ENCODE measurements at regions of chr5 and their contacts with region 1.

Region 1: DNA sequence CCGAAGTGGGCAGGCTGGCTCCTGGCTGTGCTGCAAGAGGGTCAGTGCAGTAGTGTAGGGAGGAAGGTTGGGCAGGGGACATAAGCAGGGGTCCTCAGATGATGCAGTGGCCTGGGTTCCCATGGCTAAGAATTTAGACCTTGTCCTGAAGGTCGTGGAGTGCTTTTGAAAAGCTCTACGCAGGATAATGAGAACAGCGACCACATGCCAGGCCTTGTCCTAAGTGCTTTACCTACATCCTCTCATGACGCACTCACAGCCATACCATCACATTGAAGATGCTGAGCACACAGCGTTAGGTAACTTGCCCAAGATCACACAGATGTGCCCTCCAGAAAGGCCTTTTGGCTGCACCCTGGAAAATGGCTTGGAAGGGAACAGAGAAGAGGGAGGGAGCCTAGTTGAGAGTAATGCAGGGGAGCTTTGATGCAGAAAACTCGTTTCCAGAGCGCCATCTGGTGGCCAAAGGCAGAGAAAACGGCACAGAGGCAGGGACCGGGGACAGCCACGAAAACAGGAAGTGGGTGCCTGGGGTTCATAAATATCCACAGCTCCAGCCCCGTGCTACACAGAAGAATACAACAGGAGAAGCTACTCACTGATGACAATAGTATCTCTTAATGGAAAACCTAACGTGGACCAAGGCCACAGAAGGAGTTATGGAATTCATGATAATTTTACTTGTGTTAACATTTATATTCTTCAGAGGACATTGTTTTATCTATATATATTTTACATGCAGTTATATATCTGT is 2.6 kb upstream of the PCDH12 start:
- H3K4me3 ChIP-seq: no peak overlapping the region
- H3K27ac ChIP-seq: no peak overlapping the region
- H3K4me1 ChIP-seq: no peaks in the 10 kb centered on the region
- CTCF ChIP-seq: peak; percentile 87

Region 2: GRCh38 chr5:141664732-141665461 is 295.7 kb before region 1 on chr5:
- CTCF ChIA-PET with region 1: interaction called, 18 read pairs
- POLR2A ChIA-PET with region 1: no interaction called
- H3K4me3 ChIP-seq: no peak overlapping the region
- H3K27ac ChIP-seq: no peak overlapping the region
- H3K4me1 ChIP-seq: no peaks in the 10 kb centered on the region
- CTCF ChIP-seq: peak; percentile 42

Region 3: GRCh38 chr5:141701360-141702119 is 259.1 kb before region 1 on chr5:
- CTCF ChIA-PET with region 1: interaction called, 78 read pairs
- POLR2A ChIA-PET with region 1: no interaction called
- H3K4me3 ChIP-seq: no peak overlapping the region
- H3K27ac ChIP-seq: no peak overlapping the region
- H3K4me1 ChIP-seq: no peaks in the 10 kb centered on the region; the same call in 1 of the 2 replicates
- CTCF ChIP-seq: no peak

Region 4: GRCh38 chr5:141889282-141889871 is 71.2 kb before region 1 on chr5:
- CTCF ChIA-PET with region 1: interaction called, 25 read pairs
- POLR2A ChIA-PET with region 1: no interaction called
- H3K4me3 ChIP-seq: no peak overlapping the region
- H3K27ac ChIP-seq: no peak overlapping the region
- H3K4me1 ChIP-seq: no peaks in the 10 kb centered on the region
- CTCF ChIP-seq: no peak

Region 5: DNA sequence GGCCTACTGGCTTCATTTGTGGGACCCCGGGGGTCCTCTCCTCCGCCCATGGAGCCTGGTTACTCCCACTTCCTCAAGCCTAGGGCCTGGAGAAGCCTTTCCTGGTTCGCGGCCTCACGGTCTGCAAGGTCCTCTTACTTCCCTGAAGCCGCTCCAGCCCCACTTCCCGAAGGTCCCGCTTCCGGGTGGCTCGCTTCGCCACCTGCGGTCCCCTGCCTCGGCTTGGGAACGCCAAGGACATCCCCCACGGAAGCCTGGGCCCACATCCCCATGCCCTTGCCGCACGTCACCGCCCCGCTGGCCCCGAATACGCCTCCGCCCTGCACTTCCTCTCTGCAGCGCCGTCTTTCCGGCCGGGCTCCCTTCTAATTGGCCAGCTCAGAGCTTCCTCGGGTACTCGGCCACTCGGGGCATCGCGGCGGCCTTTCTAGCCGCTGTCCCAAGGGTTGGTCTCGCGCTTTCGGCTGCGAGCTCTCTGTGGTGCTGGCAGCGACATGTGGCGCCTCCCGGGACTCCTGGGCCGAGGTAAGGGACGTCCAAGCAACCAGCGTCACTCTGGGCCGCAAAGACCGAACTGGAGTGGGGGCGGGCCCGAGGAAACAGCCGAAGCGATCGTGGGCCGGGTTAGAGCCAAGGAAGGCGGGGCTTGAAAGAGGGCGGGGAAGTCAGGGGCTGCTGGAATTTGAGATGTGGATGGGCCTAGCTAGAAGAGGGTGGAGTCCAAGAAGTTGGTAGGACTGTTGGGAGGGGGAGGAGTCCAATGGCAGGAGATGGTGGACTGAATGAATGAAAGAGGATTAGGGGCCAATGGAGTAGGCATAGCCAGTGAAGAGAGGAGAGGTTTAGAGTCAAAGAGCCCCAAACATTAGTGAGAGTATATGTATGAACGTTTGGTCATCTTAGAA is 36.9 kb before region 1 on chr5 and contains the start of gene DELE1:
- CTCF ChIA-PET with region 1: interaction called, 15 read pairs
- POLR2A ChIA-PET with region 1: interaction called, 6 read pairs
- H3K4me3 ChIP-seq: peak within 1 kb of the TSS; percentile 94
- H3K27ac ChIP-seq: peak within 1 kb of the TSS; percentile 80
- H3K4me1 ChIP-seq: no peaks in the 10 kb centered on the region
- CTCF ChIP-seq: no peak

Region 6: DNA sequence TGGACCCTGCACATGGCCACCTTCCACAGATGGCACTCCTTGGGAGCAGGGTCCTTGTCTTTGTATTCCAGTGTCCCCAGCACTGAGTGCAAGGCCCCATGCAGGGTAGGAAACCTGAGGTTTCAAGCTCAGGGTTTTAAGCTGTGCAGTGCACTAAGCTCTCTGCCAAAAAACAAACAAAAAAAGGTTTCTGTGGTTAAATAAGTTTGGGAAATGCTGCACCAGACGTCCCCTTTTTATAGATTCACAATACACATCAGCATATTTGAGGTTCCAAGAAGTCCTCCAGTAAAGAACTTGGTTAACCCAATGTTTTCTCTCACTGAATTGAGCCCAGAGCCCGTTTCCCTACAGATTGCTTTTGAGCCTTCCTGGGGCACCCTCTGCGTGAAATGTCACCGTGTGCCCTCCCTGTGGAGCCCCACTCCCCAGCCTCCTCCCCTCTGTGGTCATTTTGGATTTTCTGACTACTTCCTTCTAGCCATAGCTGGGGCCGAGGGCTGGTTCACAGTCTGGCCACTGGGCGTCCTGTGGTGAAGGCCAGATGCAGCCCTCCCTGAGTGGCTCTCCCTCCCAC is 19.8 kb before region 1 on chr5:
- CTCF ChIA-PET with region 1: interaction called, 18 read pairs
- POLR2A ChIA-PET with region 1: no interaction called
- H3K4me3 ChIP-seq: no peak overlapping the region
- H3K27ac ChIP-seq: no peak overlapping the region
- H3K4me1 ChIP-seq: no peaks in the 10 kb centered on the region
- CTCF ChIP-seq: no peak